BJ (cell line): ENCODE measurements at regions of chr5 and their contacts with region 1.

Region 1: DNA sequence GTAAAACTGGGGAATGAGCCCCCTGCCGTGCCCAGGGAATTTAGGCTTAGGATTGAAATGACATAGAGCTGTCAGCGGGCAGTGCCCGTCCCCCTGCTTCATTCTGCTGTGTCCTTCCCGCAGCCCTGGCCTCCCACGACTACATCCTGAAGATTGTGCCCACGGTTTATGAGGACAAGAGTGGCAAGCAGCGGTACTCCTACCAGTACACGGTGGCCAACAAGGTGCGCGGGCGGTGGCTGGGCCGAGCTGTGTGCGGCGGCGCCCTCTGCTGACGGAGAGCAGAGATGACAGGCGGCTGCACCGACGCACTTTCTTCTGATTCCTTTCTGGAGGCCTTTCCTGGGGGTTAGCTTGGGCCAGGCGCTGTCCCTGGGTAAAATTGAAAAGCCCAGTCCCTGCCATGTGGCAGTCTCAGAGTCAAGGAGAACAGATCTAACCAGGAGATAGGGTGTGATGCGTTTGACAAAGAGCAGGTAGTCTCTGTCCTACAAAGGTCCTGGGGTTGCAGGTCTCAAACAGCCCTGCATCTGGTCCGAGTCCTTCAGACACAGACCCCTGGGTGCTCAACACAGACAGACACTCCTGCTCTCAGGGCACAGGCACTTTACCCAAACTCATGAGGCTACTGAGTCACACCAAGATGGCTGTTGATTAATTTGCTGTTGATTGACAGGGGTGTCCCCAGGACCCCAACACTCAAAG is 26.8 kb upstream of the RPL26L1 start:
- DNase-seq: no peak
- H3K4me3 ChIP-seq: no peak overlapping the region
- H3K27me3 ChIP-seq: no peaks in the 10 kb centered on the region
- CTCF ChIP-seq: peak; percentile 95

Region 2: DNA sequence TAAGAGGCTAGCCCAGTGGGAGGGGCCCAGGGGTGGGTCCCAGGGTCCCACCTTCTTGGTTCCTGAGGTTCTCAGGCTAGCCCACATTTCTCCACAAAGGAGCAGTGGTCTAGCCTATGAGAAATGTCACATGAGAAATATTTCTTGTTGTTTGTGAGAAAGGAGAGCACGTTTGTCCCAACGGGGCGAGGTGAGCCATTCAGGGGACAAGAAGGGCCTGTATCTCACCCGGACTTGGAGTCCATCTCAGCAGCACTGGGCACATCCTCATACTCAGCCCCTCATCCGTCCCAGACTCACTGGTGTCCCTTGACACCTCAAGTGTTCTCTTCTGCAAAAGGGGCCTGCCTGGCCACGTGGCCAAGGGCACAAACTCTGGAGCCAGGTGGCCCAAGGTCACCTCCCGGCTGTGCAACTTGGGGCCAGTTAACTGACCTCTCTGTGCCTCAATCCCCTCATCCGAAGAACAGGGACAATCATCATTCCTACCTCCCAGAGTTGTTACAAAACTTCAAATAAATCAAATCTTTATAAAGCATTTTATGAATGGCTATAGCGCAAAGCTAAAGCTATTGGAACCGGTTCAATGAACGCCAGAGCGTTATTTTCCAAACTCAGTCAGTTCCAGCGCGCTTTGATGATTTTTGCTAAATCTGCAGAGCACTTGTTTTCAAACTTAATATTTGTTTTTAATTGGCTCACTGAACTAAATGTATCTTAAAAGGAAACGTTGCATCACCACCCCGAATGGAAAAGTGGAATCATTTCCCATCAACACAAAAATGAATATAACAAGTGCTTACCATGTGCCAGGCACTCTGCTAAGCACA is 210.9 kb before region 1 on chr5:
- CTCF ChIA-PET with region 1: interaction called, 63 read pairs
- POLR2A ChIA-PET with region 1: interaction called, 3 read pairs
- DNase-seq: no peak
- H3K4me3 ChIP-seq: no peak overlapping the region
- H3K27me3 ChIP-seq: no peaks in the 10 kb centered on the region
- CTCF ChIP-seq: no peak

Region 3: DNA sequence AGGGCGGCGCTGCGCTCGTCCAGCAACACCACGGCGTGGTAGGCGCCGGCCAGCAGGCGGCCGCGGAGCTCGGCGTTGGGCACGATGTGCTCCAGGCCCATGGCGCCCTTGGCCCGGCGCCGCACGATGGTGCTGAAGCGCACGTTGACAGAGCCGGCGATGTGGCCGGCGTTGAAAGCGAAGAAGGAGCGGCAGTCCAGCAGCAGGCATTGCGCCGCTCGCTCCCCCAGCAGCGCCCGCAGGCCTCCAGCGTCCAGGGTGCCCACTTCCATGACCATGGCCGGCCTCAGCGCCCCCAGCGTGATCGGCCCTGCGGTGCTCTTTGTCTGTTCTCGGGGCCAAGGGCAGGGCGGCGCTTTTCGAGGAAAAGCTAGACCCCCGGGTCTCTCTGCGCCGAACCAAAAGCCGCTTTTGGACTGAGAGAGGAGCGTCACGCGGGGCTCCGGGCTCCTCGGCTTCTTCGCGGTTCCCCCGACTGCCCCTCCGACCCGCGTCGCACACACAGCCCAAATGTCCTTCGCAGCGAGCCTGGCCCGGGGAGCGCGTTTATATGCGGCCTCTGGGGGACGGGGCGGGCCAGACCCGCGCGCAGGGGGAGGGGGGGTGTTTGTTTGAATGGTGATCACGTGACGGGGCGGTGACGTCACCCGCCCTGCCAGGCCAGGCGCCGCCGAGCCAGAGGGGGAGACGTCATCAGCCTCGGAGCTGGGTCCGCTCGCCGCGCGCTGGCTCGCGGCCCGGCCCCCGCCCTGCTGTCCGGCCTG is 161.6 kb before region 1 on chr5 and contains the start of gene DUSP1:
- CTCF ChIA-PET with region 1: interaction called, 41 read pairs
- POLR2A ChIA-PET with region 1: interaction called, 12 read pairs
- DNase-seq: peak; percentile 82
- H3K4me3 ChIP-seq: peak within 1 kb of the TSS; percentile 82
- H3K27me3 ChIP-seq: no peaks in the 10 kb centered on the region
- CTCF ChIP-seq: peak; percentile 31; the same call in 1 of the 2 replicates
- polyA plus RNA-seq, gene DUSP1: 252 and 432 TPM in 2 replicates

Region 4: DNA sequence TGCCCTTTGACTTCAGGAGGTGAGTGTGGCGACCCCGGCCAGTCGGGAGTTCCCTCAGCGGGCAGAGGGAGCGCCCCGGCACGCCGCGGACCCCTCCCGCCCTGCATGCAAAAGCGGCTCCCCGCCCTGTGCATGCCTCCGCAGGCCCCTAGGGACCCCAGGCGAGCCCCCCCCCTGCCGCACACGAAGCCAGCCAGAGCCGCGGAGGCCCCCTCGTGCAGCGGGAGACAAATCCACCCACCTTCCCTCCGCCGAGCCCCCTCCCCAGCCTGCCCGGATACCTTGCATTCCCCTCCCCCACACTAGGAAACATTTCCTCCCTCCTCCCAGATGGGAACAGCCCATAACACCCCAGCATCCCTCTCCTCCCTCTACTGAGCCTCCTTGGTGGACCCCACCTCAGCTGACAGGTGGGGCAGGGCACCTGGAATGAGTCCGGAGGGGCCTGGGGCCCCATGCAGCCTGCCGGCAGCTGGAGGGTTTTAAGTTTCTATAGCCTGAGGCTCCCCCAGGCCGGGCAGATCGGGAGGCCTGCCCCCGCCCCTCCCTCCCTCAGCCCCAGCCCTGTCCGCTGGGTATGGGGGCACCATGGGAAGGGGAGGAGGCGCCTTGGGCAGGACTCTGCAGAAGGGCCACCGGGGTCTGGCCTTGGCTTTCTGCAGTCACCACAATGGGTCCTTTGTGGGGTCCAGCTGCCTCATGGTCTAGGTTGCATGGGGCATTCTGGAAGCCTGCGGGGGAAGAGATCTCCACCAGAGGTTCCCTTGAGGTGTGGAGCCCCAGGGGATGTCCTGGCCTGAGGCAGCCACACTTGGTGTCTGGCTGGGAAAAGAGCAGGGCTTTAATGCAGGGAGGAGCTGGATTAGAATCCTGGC is 97.8 kb before region 1 on chr5:
- CTCF ChIA-PET with region 1: interaction called, 10 read pairs
- POLR2A ChIA-PET with region 1: no interaction called
- DNase-seq: no peak
- H3K4me3 ChIP-seq: peak overlapping the region; percentile 92
- H3K27me3 ChIP-seq: no peaks in the 10 kb centered on the region
- CTCF ChIP-seq: peak; percentile 29

Region 5: DNA sequence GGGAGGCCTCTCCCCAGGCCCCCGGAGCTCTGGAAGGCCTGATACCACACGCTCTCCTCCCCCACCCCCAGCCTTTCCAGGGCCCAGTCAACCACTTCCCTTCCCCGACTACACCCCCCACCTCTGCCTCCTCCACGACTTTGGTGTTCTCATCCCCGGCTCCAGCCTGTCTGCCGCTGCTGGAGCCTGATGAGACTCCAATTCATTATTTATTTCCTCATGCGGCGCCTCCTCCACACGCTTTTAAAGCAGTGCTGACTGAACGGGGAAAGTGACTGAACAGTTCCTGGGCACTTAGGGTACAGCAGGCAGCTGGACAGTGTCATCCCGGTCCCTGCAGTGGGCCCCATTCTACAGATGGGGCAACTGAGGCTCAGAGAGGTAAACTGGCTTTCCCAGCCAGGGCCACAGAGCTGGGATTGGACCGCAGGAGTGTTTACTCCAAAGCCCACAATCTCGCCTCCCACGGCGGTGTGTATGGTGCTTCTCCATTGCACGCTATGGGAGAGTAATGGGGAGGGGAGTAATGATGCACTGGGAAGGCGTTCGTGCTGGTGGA is 10.9 kb after region 1 on chr5:
- CTCF ChIA-PET with region 1: interaction called, 34 read pairs
- POLR2A ChIA-PET with region 1: no interaction called
- DNase-seq: peak; percentile 61
- H3K4me3 ChIP-seq: no peak overlapping the region
- H3K27me3 ChIP-seq: no peaks in the 10 kb centered on the region
- CTCF ChIP-seq: no peak

Region 6: GRCh38 chr5:172958331-172959046 is 26.0 kb after region 1 on chr5:
- CTCF ChIA-PET with region 1: interaction called, 11 read pairs
- POLR2A ChIA-PET with region 1: no interaction called
- DNase-seq: no peak
- H3K4me3 ChIP-seq: peak overlapping the region; percentile 94
- H3K27me3 ChIP-seq: no peaks in the 10 kb centered on the region
- CTCF ChIP-seq: no peak

Region 7: GRCh38 chr5:173412566-173412965 is 480.1 kb after region 1 on chr5:
- CTCF ChIA-PET with region 1: no interaction called
- POLR2A ChIA-PET with region 1: no interaction called
- DNase-seq: no peak
- H3K4me3 ChIP-seq: no peak overlapping the region
- H3K27me3 ChIP-seq: no peaks in the 10 kb centered on the region; the same call in 1 of the 2 replicates
- CTCF ChIP-seq: no peak